ENCODE measurements at regions of chr3 and their contacts with region 1.

Region 1: DNA sequence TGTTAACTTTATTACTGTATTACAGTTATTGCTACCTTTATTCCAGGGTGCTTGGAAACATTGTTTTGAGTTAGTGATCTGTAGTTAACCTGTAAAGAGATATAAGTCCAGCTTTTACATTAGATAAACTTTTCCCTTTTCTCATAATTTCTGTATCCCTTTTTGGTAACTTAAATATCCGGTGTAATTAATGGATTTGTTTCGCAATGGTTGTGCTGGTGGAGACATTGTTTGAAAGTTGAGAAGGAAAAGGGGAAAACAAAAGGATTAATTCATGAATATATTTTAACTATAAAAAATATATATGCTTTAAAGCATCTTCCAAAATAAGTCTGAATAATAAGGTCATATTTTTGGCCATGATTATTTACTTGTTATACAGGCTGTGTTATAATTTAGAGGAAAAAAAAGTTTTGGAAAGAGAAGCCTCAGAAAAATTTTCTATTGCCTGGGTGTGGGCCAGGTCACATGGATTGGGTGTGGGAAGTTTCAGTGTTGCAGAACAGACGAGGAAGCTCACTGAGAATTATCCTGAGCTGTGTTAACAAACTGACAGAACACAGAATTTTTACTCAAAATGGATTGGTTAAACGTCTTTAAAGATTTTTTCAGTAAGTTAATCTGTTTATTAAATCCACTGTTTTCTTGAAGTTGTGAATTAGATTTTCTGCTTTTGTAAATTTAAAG is 27.7 kb upstream of the IL20RB start:
- DNase-seq: no peak
- ATAC-seq: no peak
- H3K4me3 ChIP-seq: no peak overlapping the region
- H3K4me3 Mint-ChIP-seq: no peak overlapping the region
- H3K27ac ChIP-seq: no peak overlapping the region
- H3K27ac Mint-ChIP-seq: no peak overlapping the region
- H3K4me1 ChIP-seq: peaks cover 4% of the 10 kb centered on the region
- H3K4me1 Mint-ChIP-seq: peaks cover 74% of the 10 kb centered on the region
- H3K27me3 ChIP-seq: no peaks in the 10 kb centered on the region
- H3K27me3 Mint-ChIP-seq: no peaks in the 10 kb centered on the region
- CTCF ChIP-seq: no peak

Region 2: DNA sequence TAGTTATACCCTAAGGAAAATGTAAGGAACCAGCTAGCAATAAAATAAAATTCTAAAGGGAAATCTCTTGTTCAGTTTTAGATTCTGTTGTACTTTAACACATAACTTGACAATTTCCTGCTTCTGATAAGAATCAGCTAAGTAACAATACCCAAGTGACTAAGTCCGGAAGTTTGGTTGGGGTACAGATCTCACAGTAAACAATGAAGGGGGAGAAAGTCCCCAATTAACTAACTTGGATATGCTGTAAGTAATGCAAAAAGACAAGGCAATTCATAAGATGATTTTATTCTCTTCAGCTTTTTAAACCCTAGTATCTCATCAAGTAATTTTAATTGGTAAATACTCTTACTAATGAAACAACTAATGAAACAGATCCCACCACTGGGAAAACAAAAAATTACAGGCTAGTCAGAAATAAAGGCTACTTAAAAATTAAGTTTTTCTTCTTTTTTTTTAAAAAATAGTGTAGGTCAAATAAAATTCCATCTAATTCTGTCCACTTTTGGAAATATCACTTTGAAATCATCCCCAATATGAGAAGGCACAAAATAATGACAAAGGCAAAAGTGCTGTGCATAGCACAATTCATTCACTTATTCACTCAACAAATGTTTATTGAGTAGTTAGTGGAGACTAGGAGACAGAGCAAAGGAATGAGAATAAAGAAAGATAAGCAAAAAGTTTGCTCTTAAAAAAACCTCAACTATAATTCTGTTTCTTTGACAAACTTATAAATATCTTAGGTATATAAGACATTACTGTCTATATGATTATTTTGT is 10.1 kb before region 1 on chr3:
- CTCF ChIA-PET with region 1: no interaction called
- POLR2A ChIA-PET with region 1: interaction called, 3 read pairs
- intact Hi-C with region 1: loop called in 1 of 2 experiments (anchors 2 kb)
- DNase-seq: peak in 3 of 9 experiments; percentile 9 to 88 (median 79)
- ATAC-seq: peak; percentile 93
- H3K4me3 ChIP-seq: no peak overlapping the region
- H3K4me3 Mint-ChIP-seq: peak overlapping the region; percentile 44
- H3K27ac ChIP-seq: peak overlapping the region in 1 of 2 experiments; percentile 90
- H3K27ac Mint-ChIP-seq: peak overlapping the region; percentile 84
- H3K4me1 ChIP-seq: peaks cover 56% of the 10 kb centered on the region
- H3K4me1 Mint-ChIP-seq: peaks cover 85% of the 10 kb centered on the region
- H3K27me3 ChIP-seq: no peaks in the 10 kb centered on the region
- H3K27me3 Mint-ChIP-seq: no peaks in the 10 kb centered on the region
- CTCF ChIP-seq: no peak

Region 3: GRCh38 chr3:137205394-137206045 is 275.4 kb after region 1 on chr3:
- CTCF ChIA-PET with region 1: no interaction called
- POLR2A ChIA-PET with region 1: no interaction called
- intact Hi-C with region 1: no loop called
- DNase-seq: no peak
- ATAC-seq: no peak
- H3K4me3 ChIP-seq: no peak overlapping the region
- H3K4me3 Mint-ChIP-seq: no peak overlapping the region
- H3K27ac ChIP-seq: no peak overlapping the region
- H3K27ac Mint-ChIP-seq: no peak overlapping the region
- H3K4me1 ChIP-seq: no peaks in the 10 kb centered on the region
- H3K4me1 Mint-ChIP-seq: no peaks in the 10 kb centered on the region
- H3K27me3 ChIP-seq: no peaks in the 10 kb centered on the region
- H3K27me3 Mint-ChIP-seq: peaks cover 13% of the 10 kb centered on the region
- CTCF ChIP-seq: no peak

Region 4: DNA sequence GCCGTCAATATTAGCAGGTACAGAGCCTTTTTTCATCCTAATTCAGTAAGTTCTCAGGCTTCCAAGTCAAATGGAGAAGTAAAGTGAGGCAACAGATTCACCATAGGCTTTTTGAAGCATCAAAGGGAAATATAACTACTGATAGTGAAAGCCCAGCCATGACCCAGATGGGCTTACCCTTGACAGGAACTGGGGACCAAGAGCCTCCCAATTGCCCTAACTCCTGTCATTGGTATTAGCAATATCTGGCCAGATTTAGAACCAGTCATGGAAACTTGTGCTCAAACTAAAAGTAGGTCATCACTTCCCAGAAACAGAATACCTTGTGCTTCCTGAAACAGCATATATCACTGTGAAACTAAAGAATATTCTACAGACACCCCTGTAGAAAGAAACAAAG is 1366.5 kb after region 1 on chr3:
- CTCF ChIA-PET with region 1: no interaction called
- POLR2A ChIA-PET with region 1: no interaction called
- intact Hi-C with region 1: no loop called
- DNase-seq: no peak
- ATAC-seq: no peak
- H3K4me3 ChIP-seq: no peak overlapping the region
- H3K4me3 Mint-ChIP-seq: no peak overlapping the region
- H3K27ac ChIP-seq: no peak overlapping the region
- H3K27ac Mint-ChIP-seq: peak overlapping the region; percentile 70
- H3K4me1 ChIP-seq: no peaks in the 10 kb centered on the region
- H3K4me1 Mint-ChIP-seq: peaks cover 7% of the 10 kb centered on the region
- H3K27me3 ChIP-seq: no peaks in the 10 kb centered on the region
- H3K27me3 Mint-ChIP-seq: no peaks in the 10 kb centered on the region
- CTCF ChIP-seq: no peak

Measured in CD8-positive, alpha-beta T cell (primary cell).